Esophagus muscularis mucosa (tissue), 4 donors: ENCODE measurements at regions of chr1 and their contacts with region 1.

Region 1: GRCh38 chr1:81305997-81306452 is 494.7 kb upstream of the ADGRL2 start:
- DNase-seq: no peak
- H3K4me3 ChIP-seq: peak overlapping the region; percentile 53 to 63 (median 57)
- H3K27ac ChIP-seq: peak overlapping the region in 2 of 4 donors; percentile 18 to 39
- H3K4me1 ChIP-seq: peaks cover 0 to 28% (median 12%) of the 10 kb centered on the region in 4 donors
- H3K27me3 ChIP-seq: no peaks in the 10 kb centered on the region
- CTCF ChIP-seq: peak; percentile 47 to 55 (median 49)
- EP300 ChIP-seq: no peak
- POLR2A ChIP-seq: no peak

Region 2: GRCh38 chr1:81478219-81478618 is 172.2 kb after region 1 on chr1:
- intact Hi-C with region 1: no loop called
- DNase-seq: no peak
- H3K4me3 ChIP-seq: peak overlapping the region; percentile 33 to 49 (median 39)
- H3K27ac ChIP-seq: peak overlapping the region; percentile 34 to 63 (median 52)
- H3K4me1 ChIP-seq: peaks cover 6 to 24% (median 19%) of the 10 kb centered on the region in 4 donors
- H3K27me3 ChIP-seq: no peaks in the 10 kb centered on the region
- CTCF ChIP-seq: no peak
- EP300 ChIP-seq: no peak
- POLR2A ChIP-seq: no peak

Region 3: GRCh38 chr1:81756872-81757271 is 450.8 kb after region 1 on chr1:
- intact Hi-C with region 1: loop called (anchors 10 kb)
- DNase-seq: no peak
- H3K4me3 ChIP-seq: no peak overlapping the region
- H3K27ac ChIP-seq: no peak overlapping the region
- H3K4me1 ChIP-seq: peaks cover 3 to 27% (median 21%) of the 10 kb centered on the region in 4 donors
- H3K27me3 ChIP-seq: no peaks in the 10 kb centered on the region
- CTCF ChIP-seq: no peak
- EP300 ChIP-seq: no peak
- POLR2A ChIP-seq: no peak

Region 4: DNA sequence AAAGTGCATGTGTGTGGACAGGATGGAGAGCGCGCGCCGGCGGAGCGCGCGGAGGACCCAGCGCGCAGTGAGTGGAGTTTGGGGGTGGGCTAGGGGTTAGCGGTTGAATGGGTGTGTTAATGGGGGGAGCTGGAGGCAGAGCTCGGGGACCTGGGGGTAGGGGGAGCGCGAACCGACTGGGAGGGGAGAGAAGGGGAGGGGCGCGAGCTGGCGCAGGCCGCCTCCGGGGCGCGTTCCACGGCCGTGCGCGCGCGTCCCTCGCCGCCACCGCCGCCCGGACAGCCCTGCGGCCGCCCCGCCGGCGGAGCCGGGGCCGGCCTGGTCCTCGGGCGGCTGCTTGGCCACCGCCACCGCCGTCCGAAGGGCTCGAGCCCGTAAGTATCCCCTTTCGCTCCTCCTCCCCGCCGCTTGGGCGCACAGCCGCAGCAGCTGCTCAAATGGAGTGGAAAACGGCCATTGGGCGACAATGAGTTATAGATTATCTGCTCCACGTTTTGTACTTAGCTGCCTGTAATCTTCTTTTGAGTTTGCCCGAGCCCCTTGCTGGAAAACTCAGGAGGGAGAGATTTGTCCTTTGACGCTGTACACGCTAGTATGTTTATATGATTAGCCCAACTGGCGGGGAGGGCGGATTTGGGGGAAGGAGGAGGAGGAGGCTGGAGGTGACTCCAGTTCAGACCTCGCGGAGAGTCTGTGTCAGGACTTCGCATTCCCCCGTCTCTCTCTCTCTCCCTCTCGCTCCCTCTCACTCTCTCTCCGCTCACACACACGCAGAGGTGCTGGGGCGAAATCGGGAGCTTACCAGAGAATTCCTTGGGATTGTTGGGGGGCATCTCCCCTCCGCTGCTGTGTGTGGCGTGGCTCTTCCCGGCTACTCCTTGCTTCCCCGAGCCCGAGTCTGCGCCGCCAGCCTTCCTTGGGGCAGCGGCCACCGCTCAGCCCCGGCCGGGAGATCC is 494.9 kb after region 1 on chr1 and contains the start of gene ADGRL2:
- intact Hi-C with region 1: loop called (anchors 10 kb)
- DNase-seq: peak; percentile 93
- H3K4me3 ChIP-seq: peak within 1 kb of the TSS; percentile 84 to 91 (median 87)
- H3K27ac ChIP-seq: peak within 1 kb of the TSS; percentile 94 to 98 (median 95)
- H3K4me1 ChIP-seq: peaks cover 23 to 33% (median 29%) of the 10 kb centered on the region in 4 donors
- H3K27me3 ChIP-seq: no peaks in the 10 kb centered on the region
- CTCF ChIP-seq: no peak
- EP300 ChIP-seq: no peak
- POLR2A ChIP-seq: peak; percentile 23
- total RNA-seq, gene ADGRL2: 72.4 to 89.7 (median 78.8) TPM